ENCODE measurements at regions of chr17 and their contacts with region 1.

Region 1: DNA sequence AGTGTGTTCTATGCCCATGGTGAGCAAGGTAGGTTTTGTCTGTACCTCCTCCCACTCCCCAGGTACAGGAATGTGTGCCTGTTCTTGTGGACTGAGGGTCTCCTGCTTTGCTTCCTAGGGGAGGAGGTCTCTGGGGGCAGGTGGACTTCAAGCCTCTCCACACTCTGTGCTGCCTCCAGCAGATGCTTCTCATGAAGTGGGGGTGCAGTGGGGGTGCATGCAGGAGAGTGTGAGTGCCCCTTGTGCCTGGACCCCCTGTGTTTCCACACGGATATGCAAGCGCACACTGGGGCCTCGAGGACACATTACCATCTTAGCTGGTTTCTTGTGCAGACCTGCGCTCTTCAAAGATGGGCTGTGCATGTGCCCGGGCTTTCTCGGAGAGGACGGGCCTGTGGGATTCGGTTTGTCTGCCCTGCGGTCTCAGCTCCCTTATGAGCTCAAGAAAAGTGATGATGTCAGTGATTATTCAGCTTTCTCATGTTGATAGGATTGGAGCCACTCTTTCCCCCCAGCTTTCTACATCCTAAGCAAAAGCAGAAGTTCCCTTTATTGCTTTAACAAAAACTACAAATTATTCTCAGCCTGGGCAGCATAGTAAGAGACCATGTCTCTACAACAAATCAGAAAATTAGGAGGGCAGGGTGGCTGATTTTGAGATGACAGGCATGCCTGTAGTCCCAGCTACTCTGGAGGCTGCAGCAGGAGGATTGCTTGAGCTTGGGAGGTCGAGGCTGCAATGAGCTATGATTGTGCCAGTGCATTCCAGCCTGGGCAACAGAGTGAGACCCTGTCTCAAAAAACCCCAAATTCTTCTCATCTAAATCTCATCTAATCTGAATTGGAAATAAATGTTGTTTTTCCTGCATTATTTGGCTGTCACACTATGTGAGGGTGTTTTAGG is 86.8 kb downstream of the RPTOR start:
- DNase-seq: no peak
- ATAC-seq: no peak
- H3K4me3 Mint-ChIP-seq: no peak overlapping the region
- H3K27ac Mint-ChIP-seq: no peak overlapping the region
- H3K4me1 Mint-ChIP-seq: peaks cover 10% of the 10 kb centered on the region
- H3K27me3 Mint-ChIP-seq: no peaks in the 10 kb centered on the region

Region 2: DNA sequence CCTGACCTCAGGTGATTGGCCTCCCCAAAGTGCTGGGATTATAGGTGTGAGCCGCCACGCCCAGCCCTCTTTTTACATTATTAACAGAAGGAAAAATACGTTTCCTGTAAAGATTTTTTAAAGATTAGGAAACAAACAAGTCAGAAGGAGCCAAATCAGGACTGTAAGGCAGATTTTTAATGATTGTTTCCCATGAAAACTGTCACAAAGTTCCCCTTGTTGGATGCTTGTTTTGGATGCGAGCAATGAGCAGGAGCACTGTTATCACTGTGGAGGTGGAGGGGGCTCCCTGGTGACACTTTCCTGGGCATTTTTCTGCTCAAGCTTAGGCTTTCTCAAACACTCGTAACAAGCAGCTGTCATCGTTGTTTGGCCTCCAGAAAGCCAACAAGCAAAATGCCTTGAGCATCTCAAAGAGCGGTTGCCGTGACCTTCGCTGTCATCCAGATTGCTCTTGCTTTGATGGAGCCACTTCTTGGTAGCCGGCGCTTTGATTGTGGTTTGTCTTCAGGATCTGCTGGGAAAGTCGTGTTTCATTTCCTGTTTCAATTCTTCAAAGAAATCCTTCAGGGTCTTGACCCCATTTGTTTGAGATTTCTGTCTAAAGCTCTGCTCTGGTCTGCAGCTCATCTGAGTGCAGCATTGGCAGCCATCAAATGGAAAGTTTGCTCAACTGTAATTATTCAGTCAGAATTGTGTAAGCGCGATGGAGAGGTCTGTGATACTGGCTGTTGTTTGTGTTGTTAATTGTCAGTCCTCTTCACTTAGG is 41.9 kb after region 1 on chr17:
- POLR2A ChIA-PET with region 1: interaction called, 10 read pairs
- DNase-seq: no peak
- ATAC-seq: peak; percentile 73
- H3K4me3 Mint-ChIP-seq: peak overlapping the region; percentile 49
- H3K27ac Mint-ChIP-seq: peak overlapping the region; percentile 68
- H3K4me1 Mint-ChIP-seq: peaks cover 56% of the 10 kb centered on the region
- H3K27me3 Mint-ChIP-seq: no peaks in the 10 kb centered on the region

Measured in activated naive CD8-positive, alpha-beta T cell treated with anti-CD3 and anti-CD28 coated beads, Interleukin-2, amount 10 ng/mL, durations not matched to agents 7 days and 5 days (primary cell).